ENCODE measurements at regions of chr12 and their contacts with region 1.

Region 1: GRCh38 chr12:8870586-8870985 is 43.7 kb upstream of the PHC1 start:
- DNase-seq: no peak
- ATAC-seq: no peak
- H3K4me3 ChIP-seq: no peak overlapping the region
- H3K27ac ChIP-seq: no peak overlapping the region
- H3K4me1 ChIP-seq: no peaks in the 10 kb centered on the region
- CTCF ChIP-seq: no peak
- EP300 ChIP-seq: no peak
- POLR2A ChIP-seq: no peak
- RAD21 ChIP-seq: no peak

Region 2: DNA sequence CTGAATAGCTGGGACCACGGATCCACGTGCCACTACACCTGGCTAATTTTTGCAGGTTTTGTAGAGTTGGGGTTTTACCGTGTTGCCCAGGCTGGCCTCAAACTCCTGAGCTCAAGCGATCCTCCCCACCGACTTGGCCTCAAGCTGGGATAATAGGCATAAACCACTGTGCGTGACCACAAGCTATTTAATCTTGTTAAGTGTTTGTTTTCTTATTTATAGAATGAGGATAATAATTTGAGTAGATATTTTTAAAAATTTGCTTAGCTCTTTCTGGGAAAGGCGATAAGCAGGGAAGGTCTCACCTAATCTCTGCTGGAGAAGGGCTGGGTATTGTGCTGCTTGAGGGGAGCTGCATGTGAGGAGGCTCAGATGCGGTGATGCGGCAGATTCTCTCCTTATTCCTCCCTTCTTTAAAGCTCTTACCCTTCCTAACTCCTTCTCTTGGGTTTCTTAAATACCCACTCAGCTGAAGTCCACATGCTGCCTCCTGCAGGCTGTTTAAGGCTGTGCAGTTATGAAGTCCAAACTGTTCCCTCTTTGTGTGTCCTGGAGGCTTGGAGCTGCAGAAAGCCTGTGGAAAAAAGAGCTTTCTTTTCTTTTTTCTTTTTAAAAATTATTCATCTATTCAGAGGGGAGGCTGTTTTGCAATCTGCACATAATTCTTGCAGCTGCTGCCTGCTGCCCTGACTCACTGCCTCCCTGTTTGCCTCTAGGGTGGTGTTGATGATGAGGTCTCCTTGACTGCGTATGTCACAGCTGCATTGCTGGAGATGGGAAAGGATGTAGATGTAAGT is 10.2 kb before region 1 on chr12:
- CTCF ChIA-PET with region 1: interaction called, 13 read pairs
- POLR2A ChIA-PET with region 1: no interaction called
- DNase-seq: peak in 1 of 2 experiments; percentile 69
- ATAC-seq: peak; percentile 81 to 93; a peak in 5 of 6 replicates
- H3K4me3 ChIP-seq: no peak overlapping the region
- H3K27ac ChIP-seq: no peak overlapping the region
- H3K4me1 ChIP-seq: no peaks in the 10 kb centered on the region
- CTCF ChIP-seq: peak; percentile 42; the same call in 2 of the 3 replicates
- EP300 ChIP-seq: no peak
- POLR2A ChIP-seq: no peak
- RAD21 ChIP-seq: peak; percentile 38 to 57; a peak in 4 of 5 replicates